ENCODE measurements at regions of chr6 and their contacts with region 1.

Region 1: GRCh38 chr6:20511852-20512251 is 22.4 kb upstream of the CDKAL1 start:
- DNase-seq: no peak
- ATAC-seq: no peak
- H3K4me3 ChIP-seq: no peak overlapping the region
- H3K4me3 Mint-ChIP-seq: no peak overlapping the region
- H3K27ac ChIP-seq: no peak overlapping the region
- H3K27ac Mint-ChIP-seq: no peak overlapping the region
- H3K4me1 ChIP-seq: no peaks in the 10 kb centered on the region
- H3K4me1 Mint-ChIP-seq: no peaks in the 10 kb centered on the region
- H3K27me3 ChIP-seq: no peaks in the 10 kb centered on the region
- H3K27me3 Mint-ChIP-seq: no peaks in the 10 kb centered on the region
- CTCF ChIP-seq: no peak

Region 2: GRCh38 chr6:20291764-20292580 is 219.9 kb before region 1 on chr6:
- CTCF ChIA-PET with region 1: no interaction called
- POLR2A ChIA-PET with region 1: no interaction called
- intact Hi-C with region 1: no loop called
- DNase-seq: peak; percentile 51 to 87 (median 68)
- ATAC-seq: peak; percentile 93
- H3K4me3 ChIP-seq: no peak overlapping the region
- H3K4me3 Mint-ChIP-seq: no peak overlapping the region
- H3K27ac ChIP-seq: no peak overlapping the region
- H3K27ac Mint-ChIP-seq: no peak overlapping the region
- H3K4me1 ChIP-seq: peaks cover 11% of the 10 kb centered on the region
- H3K4me1 Mint-ChIP-seq: peaks cover 20% of the 10 kb centered on the region
- H3K27me3 ChIP-seq: no peaks in the 10 kb centered on the region
- H3K27me3 Mint-ChIP-seq: no peaks in the 10 kb centered on the region
- CTCF ChIP-seq: peak; percentile 95

Region 3: DNA sequence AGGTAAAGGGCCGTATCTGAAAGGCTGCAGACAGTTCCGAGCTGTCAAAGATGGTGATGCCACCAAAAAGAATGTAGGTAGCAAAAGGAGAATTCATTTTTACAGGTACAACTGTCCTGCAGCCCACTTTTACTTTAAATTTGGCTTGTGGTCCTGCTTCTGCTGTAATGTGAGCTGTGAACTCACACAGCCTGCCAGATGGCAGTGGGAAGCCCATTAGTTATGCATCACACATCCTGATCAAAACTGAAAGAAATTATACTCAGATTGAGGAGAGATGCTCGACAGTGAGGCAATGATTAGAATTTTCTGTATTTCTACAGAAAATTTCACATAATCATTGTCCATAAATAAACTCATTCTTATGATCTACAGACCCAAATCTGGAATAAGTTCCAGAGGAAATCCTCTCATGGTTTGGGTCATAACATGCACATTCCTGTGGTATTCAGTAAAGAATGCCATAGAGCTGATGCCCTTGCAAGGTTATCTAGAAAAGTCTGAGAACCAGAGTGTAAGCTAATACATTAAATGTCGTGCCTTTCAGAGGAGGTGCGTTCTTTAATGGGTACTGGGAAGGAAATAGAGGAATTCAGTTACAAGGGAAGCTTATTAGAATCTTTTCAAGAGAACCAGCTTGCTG is 134.1 kb before region 1 on chr6:
- CTCF ChIA-PET with region 1: no interaction called
- POLR2A ChIA-PET with region 1: no interaction called
- intact Hi-C with region 1: no loop called
- DNase-seq: no peak
- ATAC-seq: no peak
- H3K4me3 ChIP-seq: no peak overlapping the region
- H3K4me3 Mint-ChIP-seq: no peak overlapping the region
- H3K27ac ChIP-seq: no peak overlapping the region
- H3K27ac Mint-ChIP-seq: no peak overlapping the region
- H3K4me1 ChIP-seq: peaks cover 4% of the 10 kb centered on the region
- H3K4me1 Mint-ChIP-seq: peaks cover 19% of the 10 kb centered on the region
- H3K27me3 ChIP-seq: no peaks in the 10 kb centered on the region
- H3K27me3 Mint-ChIP-seq: no peaks in the 10 kb centered on the region
- CTCF ChIP-seq: no peak

Region 4: GRCh38 chr6:20417819-20418218 is 94.0 kb before region 1 on chr6:
- CTCF ChIA-PET with region 1: no interaction called
- POLR2A ChIA-PET with region 1: no interaction called
- intact Hi-C with region 1: loop called in 1 of 2 experiments (anchors 5 kb)
- DNase-seq: no peak
- ATAC-seq: no peak
- H3K4me3 ChIP-seq: no peak overlapping the region
- H3K4me3 Mint-ChIP-seq: peak overlapping the region; percentile 2
- H3K27ac ChIP-seq: no peak overlapping the region
- H3K27ac Mint-ChIP-seq: no peak overlapping the region
- H3K4me1 ChIP-seq: peaks cover 27% of the 10 kb centered on the region
- H3K4me1 Mint-ChIP-seq: peaks cover 53% of the 10 kb centered on the region
- H3K27me3 ChIP-seq: no peaks in the 10 kb centered on the region
- H3K27me3 Mint-ChIP-seq: no peaks in the 10 kb centered on the region
- CTCF ChIP-seq: no peak

Measured in CD4-positive, alpha-beta T cell (primary cell).